G401 (cell line): ENCODE measurements at regions of chr2 and their contacts with region 1.

Region 1: GRCh38 chr2:240213476-240214421 is 73.3 kb upstream of the OTOS start:
- DNase-seq: no peak

Region 2: DNA sequence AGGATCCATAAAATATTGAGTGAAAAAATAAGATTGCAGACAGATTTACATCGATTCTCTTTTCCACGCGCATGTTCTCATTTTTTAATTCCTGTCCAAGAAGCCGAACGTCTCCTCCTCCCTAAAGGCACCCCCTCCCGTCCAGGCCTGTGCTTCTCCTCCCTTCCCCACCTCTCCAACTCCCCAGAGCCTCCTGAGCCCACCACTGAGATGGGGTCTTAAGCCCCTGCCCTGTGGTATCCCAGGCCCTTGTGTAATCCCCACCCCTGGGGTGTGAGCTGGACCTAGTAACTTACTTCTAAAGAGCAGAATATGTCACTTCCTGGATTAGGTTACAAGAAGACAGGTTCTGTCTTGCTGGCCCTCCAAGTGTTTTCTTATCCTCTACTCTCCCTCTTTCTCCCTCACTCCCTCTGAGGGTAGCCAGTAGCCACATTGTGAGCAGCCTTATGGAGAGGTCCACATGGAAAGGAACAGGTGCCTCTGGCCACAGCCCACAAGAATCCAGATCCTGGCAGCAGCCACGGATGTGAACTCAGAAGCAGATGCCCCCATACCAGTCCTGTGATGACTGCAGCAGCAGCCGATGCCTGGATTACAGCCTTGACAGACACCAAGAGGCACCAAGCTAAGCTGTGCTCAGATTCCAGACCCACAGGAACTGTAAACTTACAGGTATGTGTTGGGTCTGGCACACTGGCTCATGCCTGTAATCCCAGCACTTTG is 33.6 kb before region 1 on chr2:
- in situ Hi-C with region 1: loop called (anchors 5 kb)
- DNase-seq: no peak

Region 3: DNA sequence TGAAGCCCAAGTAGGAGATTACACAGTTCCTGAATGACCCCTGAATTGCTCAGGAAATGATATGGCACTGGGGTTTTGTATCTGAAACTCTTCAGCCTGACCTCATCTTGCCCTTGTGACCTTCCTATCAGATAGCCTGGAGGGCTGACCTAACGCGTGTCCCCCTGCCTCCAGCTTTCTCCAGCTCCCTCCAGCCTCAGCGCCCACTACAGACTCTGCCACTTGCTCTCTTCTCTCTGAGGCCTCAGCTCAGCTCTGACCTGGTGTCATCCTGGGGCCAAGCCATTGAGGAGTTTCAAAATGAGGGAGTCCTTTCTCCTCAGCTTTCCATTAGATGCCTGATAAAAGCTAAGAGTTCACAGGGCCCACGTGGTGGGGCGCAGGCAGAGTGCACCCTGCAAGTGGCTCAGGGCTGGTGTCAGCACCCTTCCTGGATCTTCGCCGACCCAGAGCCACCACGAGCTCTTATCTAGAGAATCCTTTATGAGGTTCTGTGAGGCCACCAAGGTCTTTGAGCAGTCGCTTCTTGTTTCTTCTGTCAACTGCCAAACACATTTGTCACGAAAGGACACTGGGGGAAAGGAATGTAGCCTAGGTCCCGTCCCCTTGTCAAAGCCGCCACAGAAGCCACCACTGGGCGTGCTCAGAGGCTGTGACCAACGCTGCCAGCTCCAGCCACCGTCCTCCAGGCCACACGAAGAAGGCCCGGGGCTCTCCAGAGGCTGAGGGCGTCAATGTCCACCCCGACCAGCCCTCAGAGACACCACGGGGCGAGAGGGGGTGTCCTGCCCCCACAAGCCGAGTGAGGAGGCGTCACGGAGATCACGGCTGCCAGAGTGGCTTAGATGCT is 90.4 kb after region 1 on chr2:
- in situ Hi-C with region 1: no loop called
- DNase-seq: no peak